Caco-2 (cell line): ENCODE measurements at regions of chr3 and their contacts with region 1.

Region 1: GRCh38 chr3:57582474-57583168 is 14.5 kb downstream of the ARF4 start:
- DNase-seq: peak; percentile 70 to 75
- H3K4me3 ChIP-seq: no peak overlapping the region
- H3K4me3 Mint-ChIP-seq: no peak overlapping the region
- H3K27ac Mint-ChIP-seq: no peak overlapping the region
- H3K4me1 ChIP-seq: peaks cover 49% of the 10 kb centered on the region
- H3K4me1 Mint-ChIP-seq: peaks cover 6% of the 10 kb centered on the region
- H3K27me3 ChIP-seq: no peaks in the 10 kb centered on the region
- H3K27me3 Mint-ChIP-seq: no peaks in the 10 kb centered on the region
- CTCF ChIP-seq: peak in 1 of 2 experiments; percentile 11

Region 2: DNA sequence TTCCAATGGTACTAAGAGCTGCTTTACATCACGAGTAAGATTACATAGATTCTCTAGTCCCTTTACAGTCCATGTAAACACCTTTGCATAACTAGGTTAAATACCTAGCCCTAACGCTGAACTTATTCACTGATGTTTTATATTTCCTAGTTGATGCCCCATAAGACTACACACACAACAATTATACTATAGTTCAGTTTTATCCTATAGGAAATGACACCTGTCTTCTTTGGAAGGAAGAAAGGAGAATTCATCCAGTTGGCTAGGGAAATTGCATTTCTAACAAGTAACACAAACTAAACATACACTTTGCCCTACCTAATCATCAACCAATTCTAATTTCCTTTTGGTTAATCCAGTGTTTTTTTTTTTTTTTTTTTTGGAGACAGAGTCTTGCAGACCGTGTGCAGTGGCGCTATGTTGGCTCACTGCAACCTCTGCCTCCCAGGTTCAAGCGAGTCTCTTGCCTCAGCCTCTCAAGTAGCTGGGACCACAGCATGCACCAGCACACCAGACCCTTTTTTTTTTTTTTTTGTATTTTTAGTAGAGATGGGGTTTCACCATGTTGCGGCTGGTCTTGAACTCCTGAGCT is 12.7 kb before region 1 on chr3:
- CTCF ChIA-PET with region 1: no interaction called
- POLR2A ChIA-PET with region 1: interaction called, 11 read pairs
- intact Hi-C with region 1: no loop called
- DNase-seq: no peak
- H3K4me3 ChIP-seq: no peak overlapping the region
- H3K4me3 Mint-ChIP-seq: no peak overlapping the region
- H3K27ac Mint-ChIP-seq: no peak overlapping the region
- H3K4me1 ChIP-seq: no peaks in the 10 kb centered on the region
- H3K4me1 Mint-ChIP-seq: no peaks in the 10 kb centered on the region
- H3K27me3 ChIP-seq: no peaks in the 10 kb centered on the region
- H3K27me3 Mint-ChIP-seq: no peaks in the 10 kb centered on the region
- CTCF ChIP-seq: no peak

Region 3: DNA sequence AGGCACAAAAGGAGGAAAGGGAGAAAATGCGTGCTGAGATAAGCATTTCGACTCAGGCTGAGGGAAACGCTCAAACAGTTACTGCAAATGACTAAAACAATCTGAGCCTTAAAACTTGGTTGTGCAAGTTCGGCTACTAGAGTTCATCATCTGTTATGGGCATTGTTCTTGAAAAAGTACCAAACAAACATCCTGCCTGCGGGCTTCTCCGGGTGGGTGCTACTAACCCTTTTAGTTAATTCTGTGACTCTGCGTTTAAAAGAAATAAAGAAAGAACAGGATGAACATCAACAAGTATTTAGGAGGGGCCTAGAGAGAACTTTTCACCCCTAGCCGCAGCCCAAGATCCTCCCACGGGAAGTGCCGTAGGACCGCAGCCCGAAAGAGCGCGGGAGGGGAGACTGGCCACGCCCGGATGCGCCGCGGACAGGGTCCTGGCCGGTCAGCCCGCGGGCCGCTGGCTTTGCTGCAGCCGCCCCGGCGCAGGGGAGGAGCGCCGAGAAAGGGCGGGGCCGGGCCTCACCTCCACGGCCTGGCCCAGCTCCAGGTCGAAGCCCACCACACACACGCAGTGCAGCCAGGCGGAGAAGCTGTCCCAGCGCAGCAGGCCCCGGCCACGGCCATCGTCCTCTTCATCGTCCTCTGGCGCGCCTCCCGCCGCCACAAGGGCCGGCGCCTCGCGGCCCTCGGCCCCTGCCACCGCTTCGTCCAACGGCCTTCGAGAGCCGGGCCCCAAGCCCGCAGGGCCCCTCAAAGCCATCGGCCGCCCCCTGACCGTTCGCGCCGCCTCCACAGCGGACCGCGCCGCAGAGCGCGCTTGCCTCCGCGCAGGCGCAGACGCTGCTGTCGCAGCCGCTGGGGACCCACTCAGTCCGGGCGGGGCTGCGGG is 109.9 kb after region 1 on chr3 and contains the start of gene DENND6A:
- CTCF ChIA-PET with region 1: no interaction called
- POLR2A ChIA-PET with region 1: no interaction called
- intact Hi-C with region 1: no loop called
- DNase-seq: peak; percentile 96
- H3K4me3 ChIP-seq: peak within 1 kb of the TSS; percentile 60
- H3K4me3 Mint-ChIP-seq: peak within 1 kb of the TSS; percentile 82
- H3K27ac Mint-ChIP-seq: peak within 1 kb of the TSS; percentile 77
- H3K4me1 ChIP-seq: peaks cover 13% of the 10 kb centered on the region; the same call in 1 of the 2 replicates
- H3K4me1 Mint-ChIP-seq: peaks cover 6% of the 10 kb centered on the region
- H3K27me3 ChIP-seq: no peaks in the 10 kb centered on the region
- H3K27me3 Mint-ChIP-seq: no peaks in the 10 kb centered on the region
- CTCF ChIP-seq: no peak
- total RNA-seq, gene DENND6A: 20.6 and 21.8 TPM in 2 replicates